Right lobe of liver (tissue), 6 donors: ENCODE measurements at regions of chr14 and their contacts with region 1.

Region 1: GRCh38 chr14:103292426-103293374 is 41.3 kb upstream of the EIF5 start:
- DNase-seq: peak; percentile 75 to 80 (median 79)
- ATAC-seq: peak; percentile 89 to 95 (median 92)
- H3K4me3 ChIP-seq: no peak overlapping the region
- H3K27ac ChIP-seq: no peak overlapping the region
- H3K4me1 ChIP-seq: no peaks in the 10 kb centered on the region
- H3K27me3 ChIP-seq: no peaks in the 10 kb centered on the region
- CTCF ChIP-seq: peak; percentile 89 to 93 (median 92)
- POLR2A ChIP-seq: no peak

Region 2: DNA sequence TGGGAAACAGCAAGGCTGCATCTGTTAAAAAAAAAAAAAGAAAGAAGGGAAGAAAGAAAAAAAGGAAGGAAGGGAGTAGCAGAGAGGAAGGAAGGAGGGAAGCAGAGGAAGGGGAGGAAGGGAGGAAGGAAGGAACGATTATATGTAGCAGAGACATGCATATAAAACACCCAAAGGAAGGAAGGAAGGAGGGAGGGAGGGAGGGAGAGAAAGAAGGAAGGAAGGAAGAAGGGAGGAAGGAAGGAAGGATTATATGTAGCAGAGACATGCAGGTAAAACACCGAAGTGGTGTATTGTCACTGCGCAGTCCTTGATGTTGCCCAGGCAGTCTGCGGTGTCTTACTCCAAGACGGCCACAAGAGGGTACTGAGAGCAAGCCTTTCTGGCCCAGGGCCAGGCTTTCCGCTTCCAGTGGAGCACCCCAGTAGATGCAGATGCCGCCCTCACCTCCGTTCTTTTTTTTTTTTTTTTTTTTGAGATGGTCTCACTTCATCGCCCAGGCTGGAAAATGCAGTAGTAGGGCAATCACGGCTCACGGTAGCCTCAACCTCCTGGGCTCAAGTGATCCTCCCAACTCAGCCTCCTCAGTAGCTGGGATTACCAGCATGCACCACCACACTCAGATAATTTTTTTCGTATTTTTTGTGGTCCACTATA is 214.5 kb before region 1 on chr14:
- intact Hi-C with region 1: loop called in 1 of 2 experiments (anchors 10 kb)
- DNase-seq: peak; percentile 84 to 86 (median 85)
- ATAC-seq: peak; percentile 51 to 67 (median 62)
- H3K4me3 ChIP-seq: no peak overlapping the region
- H3K27ac ChIP-seq: no peak overlapping the region
- H3K4me1 ChIP-seq: peaks cover 0 to 8% (median 0%) of the 10 kb centered on the region in 4 donors
- H3K27me3 ChIP-seq: no peaks in the 10 kb centered on the region
- CTCF ChIP-seq: peak; percentile 66 to 73 (median 66)
- POLR2A ChIP-seq: no peak

Region 3: GRCh38 chr14:103198131-103199105 is 94.3 kb before region 1 on chr14:
- intact Hi-C with region 1: loop called (anchors 10 kb)
- DNase-seq: no peak
- ATAC-seq: peak; percentile 88 to 92 (median 91)
- H3K4me3 ChIP-seq: no peak overlapping the region
- H3K27ac ChIP-seq: peak overlapping the region; percentile 39 to 87 (median 83)
- H3K4me1 ChIP-seq: peaks cover 0 to 21% (median 8%) of the 10 kb centered on the region in 4 donors
- H3K27me3 ChIP-seq: no peaks in the 10 kb centered on the region
- CTCF ChIP-seq: no peak
- POLR2A ChIP-seq: no peak